CD4-positive, alpha-beta T cell (primary cell): ENCODE measurements at regions of chr6 and their contacts with region 1.

Region 1: GRCh38 chr6:6724539-6725467 is 136.3 kb downstream of the LY86 start:
- DNase-seq: peak; percentile 33 to 75 (median 48)
- ATAC-seq: peak; percentile 98
- H3K4me3 ChIP-seq: peak overlapping the region; percentile 30
- H3K4me3 Mint-ChIP-seq: peak overlapping the region; percentile 32
- H3K27ac ChIP-seq: no peak overlapping the region
- H3K27ac Mint-ChIP-seq: peak overlapping the region; percentile 21
- H3K4me1 ChIP-seq: peaks cover 15% of the 10 kb centered on the region
- H3K4me1 Mint-ChIP-seq: peaks cover 10% of the 10 kb centered on the region
- H3K27me3 ChIP-seq: peaks cover 0 to 4% of the 10 kb centered on the region in 2 experiments
- H3K27me3 Mint-ChIP-seq: no peaks in the 10 kb centered on the region
- CTCF ChIP-seq: peak; percentile 72

Region 2: GRCh38 chr6:6676910-6677441 is 47.8 kb before region 1 on chr6:
- CTCF ChIA-PET with region 1: interaction called, 3 read pairs
- POLR2A ChIA-PET with region 1: no interaction called
- intact Hi-C with region 1: loop called in 1 of 2 experiments (anchors 1 kb)
- DNase-seq: peak; percentile 62 to 87 (median 75)
- ATAC-seq: peak; percentile 99
- H3K4me3 ChIP-seq: no peak overlapping the region
- H3K4me3 Mint-ChIP-seq: no peak overlapping the region
- H3K27ac ChIP-seq: no peak overlapping the region
- H3K27ac Mint-ChIP-seq: peak overlapping the region; percentile 25
- H3K4me1 ChIP-seq: peaks cover 3% of the 10 kb centered on the region
- H3K4me1 Mint-ChIP-seq: peaks cover 15% of the 10 kb centered on the region
- H3K27me3 ChIP-seq: no peaks in the 10 kb centered on the region
- H3K27me3 Mint-ChIP-seq: no peaks in the 10 kb centered on the region
- CTCF ChIP-seq: peak; percentile 99

Region 3: DNA sequence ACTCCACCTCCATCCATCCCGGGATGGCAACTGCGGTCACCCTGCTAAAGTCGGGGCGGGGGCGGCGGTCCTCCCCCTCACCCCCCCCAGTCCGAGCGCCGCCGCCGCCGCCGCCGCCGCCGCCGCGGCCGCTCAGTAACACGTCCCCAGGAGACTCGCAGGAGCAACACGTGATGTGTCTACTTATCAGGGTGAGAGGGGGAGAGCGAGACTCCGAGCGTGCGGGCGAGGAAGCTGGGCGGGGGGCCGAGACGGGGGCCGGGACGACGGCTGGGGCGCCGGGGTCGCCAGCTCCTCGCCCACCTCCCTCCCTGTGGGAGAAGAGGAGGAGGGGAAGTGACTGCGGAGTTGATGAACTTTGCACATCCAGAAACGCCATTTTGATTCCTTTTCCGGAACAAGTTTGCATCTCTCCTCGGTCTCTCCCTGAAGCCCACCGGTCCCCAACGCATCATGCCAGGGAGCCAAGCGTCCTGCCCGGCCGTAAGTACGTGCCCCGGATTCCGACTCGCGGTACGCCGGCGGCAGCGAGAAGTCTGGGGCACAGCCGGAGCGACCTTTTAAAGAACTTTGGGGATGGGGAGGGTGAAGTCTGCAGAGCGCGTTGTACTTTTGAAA is 382.9 kb after region 1 on chr6 and contains the start of gene RREB1:
- CTCF ChIA-PET with region 1: interaction called, 4 read pairs
- POLR2A ChIA-PET with region 1: no interaction called
- intact Hi-C with region 1: loop called (anchors 10 kb)
- DNase-seq: peak; percentile 26 to 79 (median 48)
- ATAC-seq: peak; percentile 50
- H3K4me3 ChIP-seq: peak within 1 kb of the TSS; percentile 93
- H3K4me3 Mint-ChIP-seq: peak within 1 kb of the TSS; percentile 100
- H3K27ac ChIP-seq: peak within 1 kb of the TSS; percentile 63 to 74
- H3K27ac Mint-ChIP-seq: peak within 1 kb of the TSS; percentile 93
- H3K4me1 ChIP-seq: peaks cover 21% of the 10 kb centered on the region
- H3K4me1 Mint-ChIP-seq: peaks cover 43% of the 10 kb centered on the region
- H3K27me3 ChIP-seq: no peaks in the 10 kb centered on the region
- H3K27me3 Mint-ChIP-seq: no peaks in the 10 kb centered on the region
- CTCF ChIP-seq: no peak
- total RNA-seq, gene RREB1: 56.5 to 60.0 TPM

Region 4: GRCh38 chr6:7112741-7113313 is 388.0 kb after region 1 on chr6:
- CTCF ChIA-PET with region 1: no interaction called
- POLR2A ChIA-PET with region 1: no interaction called
- intact Hi-C with region 1: loop called (anchors 10 kb)
- DNase-seq: peak in 13 of 14 experiments; percentile 22 to 84 (median 53)
- ATAC-seq: peak; percentile 70
- H3K4me3 ChIP-seq: no peak overlapping the region
- H3K4me3 Mint-ChIP-seq: peak overlapping the region; percentile 88
- H3K27ac ChIP-seq: peak overlapping the region in 1 of 2 donors; percentile 33
- H3K27ac Mint-ChIP-seq: peak overlapping the region; percentile 87
- H3K4me1 ChIP-seq: peaks cover 45% of the 10 kb centered on the region
- H3K4me1 Mint-ChIP-seq: peaks cover 76% of the 10 kb centered on the region
- H3K27me3 ChIP-seq: no peaks in the 10 kb centered on the region
- H3K27me3 Mint-ChIP-seq: no peaks in the 10 kb centered on the region
- CTCF ChIP-seq: no peak

Region 5: GRCh38 chr6:7238900-7239589 is 514.2 kb after region 1 on chr6:
- CTCF ChIA-PET with region 1: interaction called, 3 read pairs
- POLR2A ChIA-PET with region 1: no interaction called
- intact Hi-C with region 1: loop called (anchors 1 kb)
- DNase-seq: peak; percentile 35 to 82 (median 64)
- ATAC-seq: peak; percentile 60
- H3K4me3 ChIP-seq: no peak overlapping the region
- H3K4me3 Mint-ChIP-seq: no peak overlapping the region
- H3K27ac ChIP-seq: no peak overlapping the region
- H3K27ac Mint-ChIP-seq: peak overlapping the region; percentile 52
- H3K4me1 ChIP-seq: peaks cover 7% of the 10 kb centered on the region
- H3K4me1 Mint-ChIP-seq: peaks cover 20% of the 10 kb centered on the region
- H3K27me3 ChIP-seq: no peaks in the 10 kb centered on the region
- H3K27me3 Mint-ChIP-seq: no peaks in the 10 kb centered on the region
- CTCF ChIP-seq: peak; percentile 67

Region 6: GRCh38 chr6:7615611-7616383 is 891.0 kb after region 1 on chr6:
- CTCF ChIA-PET with region 1: no interaction called
- POLR2A ChIA-PET with region 1: no interaction called
- intact Hi-C with region 1: loop called in 1 of 2 experiments (anchors 2 kb)
- DNase-seq: peak in 10 of 14 experiments; percentile 7 to 70 (median 16)
- ATAC-seq: peak; percentile 64
- H3K4me3 ChIP-seq: no peak overlapping the region
- H3K4me3 Mint-ChIP-seq: no peak overlapping the region
- H3K27ac ChIP-seq: no peak overlapping the region
- H3K27ac Mint-ChIP-seq: peak overlapping the region; percentile 4
- H3K4me1 ChIP-seq: peaks cover 5% of the 10 kb centered on the region
- H3K4me1 Mint-ChIP-seq: peaks cover 6% of the 10 kb centered on the region
- H3K27me3 ChIP-seq: peaks cover 0 to 3% of the 10 kb centered on the region in 2 experiments
- H3K27me3 Mint-ChIP-seq: no peaks in the 10 kb centered on the region
- CTCF ChIP-seq: peak; percentile 81

Region 7: GRCh38 chr6:8219352-8219943 is 1494.6 kb after region 1 on chr6:
- CTCF ChIA-PET with region 1: no interaction called
- POLR2A ChIA-PET with region 1: no interaction called
- intact Hi-C with region 1: loop called in 1 of 2 experiments (anchors 5 kb)
- DNase-seq: peak in 10 of 14 experiments; percentile 1 to 70 (median 14)
- ATAC-seq: peak; percentile 52
- H3K4me3 ChIP-seq: no peak overlapping the region
- H3K4me3 Mint-ChIP-seq: no peak overlapping the region
- H3K27ac ChIP-seq: no peak overlapping the region
- H3K27ac Mint-ChIP-seq: no peak overlapping the region
- H3K4me1 ChIP-seq: no peaks in the 10 kb centered on the region
- H3K4me1 Mint-ChIP-seq: no peaks in the 10 kb centered on the region
- H3K27me3 ChIP-seq: peaks cover 0 to 5% of the 10 kb centered on the region in 2 experiments
- H3K27me3 Mint-ChIP-seq: peaks cover 20% of the 10 kb centered on the region
- CTCF ChIP-seq: peak; percentile 88